RWPE1 (cell line): ENCODE measurements at regions of chr17 and their contacts with region 1.

Region 1: GRCh38 chr17:39687811-39688518 is at the start of gene PGAP3:
- DNase-seq: peak; percentile 97
- H3K27ac ChIP-seq: peak within 1 kb of the TSS; percentile 96
- CTCF ChIP-seq: no peak

Region 2: GRCh38 chr17:39699818-39700147 is 11.8 kb after region 1 on chr17 and contains the start of gene ERBB2:
- CTCF ChIA-PET with region 1: interaction called, 3 read pairs
- POLR2A ChIA-PET with region 1: interaction called, 10 read pairs
- DNase-seq: peak; percentile 87
- H3K27ac ChIP-seq: peak within 1 kb of the TSS; percentile 75
- CTCF ChIP-seq: no peak